T-cell (primary cell): ENCODE measurements at regions of chr2 and their contacts with region 1.

Region 1: DNA sequence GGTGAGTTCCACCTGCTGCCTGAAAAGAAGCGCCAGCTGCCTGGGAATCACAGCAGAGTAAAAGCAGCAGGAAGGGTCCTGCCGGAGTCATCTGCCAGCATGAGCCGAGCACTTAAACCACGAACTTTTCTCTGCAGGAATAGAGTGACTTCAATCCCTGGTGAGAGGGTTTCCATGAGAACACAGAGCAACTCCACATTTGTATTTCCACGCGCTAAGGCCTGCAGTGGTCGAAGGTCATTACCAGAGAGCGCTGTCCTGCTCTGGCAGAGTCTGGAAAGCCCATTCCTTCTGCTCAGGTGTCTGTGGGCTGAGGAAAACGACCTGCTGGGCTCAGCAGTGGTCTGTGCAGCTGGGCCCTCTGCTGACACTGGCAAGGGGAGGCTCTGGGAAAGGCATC is 6.7 kb downstream of the PASK start:
- DNase-seq: no peak
- ATAC-seq: no peak
- H3K4me3 ChIP-seq: no peak overlapping the region
- H3K4me3 Mint-ChIP-seq: no peak overlapping the region
- H3K27ac ChIP-seq: no peak overlapping the region
- H3K27ac Mint-ChIP-seq: no peak overlapping the region
- H3K4me1 ChIP-seq: peaks cover 0 to under 1% of the 10 kb centered on the region in 2 experiments
- H3K4me1 Mint-ChIP-seq: peaks cover 4 to 27% (median 15%) of the 10 kb centered on the region in 3 donors
- H3K27me3 ChIP-seq: no peaks in the 10 kb centered on the region
- H3K27me3 Mint-ChIP-seq: no peaks in the 10 kb centered on the region

Region 2: DNA sequence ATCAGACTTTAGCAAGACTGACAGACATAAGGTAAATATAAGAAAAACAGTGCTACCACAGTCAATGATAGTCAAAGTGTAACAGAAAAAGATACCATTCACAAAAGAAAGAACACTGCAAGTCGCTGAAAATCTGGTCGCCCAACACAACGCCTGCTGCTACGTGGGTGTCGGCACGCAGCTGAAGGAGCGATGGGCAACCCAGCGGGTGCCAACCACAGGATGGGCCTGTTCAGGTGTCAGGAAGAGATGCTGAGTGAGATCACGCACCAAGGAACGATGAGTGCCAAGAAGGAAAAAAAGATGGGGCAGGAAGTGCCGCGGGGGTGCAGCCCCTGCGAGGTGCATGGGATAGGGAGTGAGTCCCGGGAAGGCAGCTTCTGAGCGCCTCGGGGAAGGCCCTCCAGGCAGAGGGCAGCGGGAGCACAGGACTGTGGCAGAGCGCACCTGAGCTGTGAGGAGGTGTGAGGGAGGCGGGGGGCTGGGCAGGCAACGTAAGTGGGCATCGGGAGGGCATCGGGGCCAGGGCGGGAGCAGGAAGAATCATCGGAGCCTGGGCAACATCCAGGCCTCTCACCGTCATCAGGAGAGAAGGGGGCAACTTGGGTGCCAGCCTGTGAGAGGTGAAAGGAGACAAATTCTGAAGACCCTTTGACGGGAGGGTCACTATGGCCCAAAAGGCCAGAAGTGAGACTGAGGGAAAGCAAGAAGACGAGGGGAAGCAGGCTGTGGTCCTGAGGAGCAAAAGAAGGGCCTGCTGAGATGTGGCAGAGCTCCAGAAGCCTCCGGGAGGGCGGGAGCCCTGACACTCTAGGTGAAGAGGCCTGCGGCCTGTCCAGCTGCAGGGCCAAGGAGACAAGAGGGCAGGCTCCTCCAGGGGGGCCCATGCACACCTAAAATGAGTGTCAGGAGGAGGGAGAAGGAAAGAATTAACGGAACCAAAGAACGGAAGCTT is 25.7 kb before region 1 on chr2:
- CTCF ChIA-PET with region 1: no interaction called
- POLR2A ChIA-PET with region 1: no interaction called
- DNase-seq: no peak
- ATAC-seq: no peak
- H3K4me3 ChIP-seq: no peak overlapping the region
- H3K4me3 Mint-ChIP-seq: no peak overlapping the region
- H3K27ac ChIP-seq: no peak overlapping the region
- H3K27ac Mint-ChIP-seq: peak overlapping the region in 1 of 2 donors; percentile 64
- H3K4me1 ChIP-seq: peaks cover 0 to 7% of the 10 kb centered on the region in 2 experiments
- H3K4me1 Mint-ChIP-seq: peaks cover 11 to 21% (median 20%) of the 10 kb centered on the region in 3 donors
- H3K27me3 ChIP-seq: no peaks in the 10 kb centered on the region
- H3K27me3 Mint-ChIP-seq: no peaks in the 10 kb centered on the region

Region 3: DNA sequence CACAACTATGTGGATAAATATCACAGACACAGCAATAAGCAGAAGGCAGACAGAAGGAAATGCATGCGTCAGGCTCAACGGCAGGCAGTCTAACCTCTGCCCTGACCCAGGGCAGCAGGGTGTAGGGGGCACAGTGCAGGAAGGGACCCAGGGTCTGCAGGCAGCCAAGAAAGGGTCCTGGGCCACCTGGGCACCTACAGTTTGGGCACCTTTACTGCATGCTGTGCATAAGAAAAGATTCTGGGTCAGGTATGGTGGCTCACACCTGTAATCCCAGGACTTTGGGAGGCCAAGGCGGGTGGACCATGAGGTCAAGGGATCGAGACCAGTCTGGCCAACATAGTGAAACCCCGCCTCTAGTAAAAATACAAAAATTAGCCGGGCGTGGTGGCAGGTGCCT is 11.1 kb before region 1 on chr2:
- CTCF ChIA-PET with region 1: interaction called in 1 of 2 experiments, 10 read pairs
- POLR2A ChIA-PET with region 1: no interaction called
- DNase-seq: no peak
- ATAC-seq: no peak
- H3K4me3 ChIP-seq: no peak overlapping the region
- H3K4me3 Mint-ChIP-seq: no peak overlapping the region
- H3K27ac ChIP-seq: no peak overlapping the region
- H3K27ac Mint-ChIP-seq: no peak overlapping the region
- H3K4me1 ChIP-seq: peaks cover 0 to 27% of the 10 kb centered on the region in 2 experiments
- H3K4me1 Mint-ChIP-seq: peaks cover 17 to 21% (median 19%) of the 10 kb centered on the region in 3 donors
- H3K27me3 ChIP-seq: no peaks in the 10 kb centered on the region
- H3K27me3 Mint-ChIP-seq: no peaks in the 10 kb centered on the region